Common myeloid progenitor, CD34-positive (primary cell): ENCODE measurements at regions of chr9 and their contacts with region 1.

Region 1: GRCh38 chr9:91177661-91178280 is 183.9 kb downstream of the AUH start:
- DNase-seq: peak; percentile 34 to 89 (median 84)
- H3K4me3 ChIP-seq: peak overlapping the region in 1 of 7 experiments; percentile 33
- H3K27ac ChIP-seq: no peak overlapping the region
- H3K4me1 ChIP-seq: peaks cover 14 to 25% (median 22%) of the 10 kb centered on the region in 4 experiments
- H3K27me3 ChIP-seq: no peaks in the 10 kb centered on the region

Region 2: DNA sequence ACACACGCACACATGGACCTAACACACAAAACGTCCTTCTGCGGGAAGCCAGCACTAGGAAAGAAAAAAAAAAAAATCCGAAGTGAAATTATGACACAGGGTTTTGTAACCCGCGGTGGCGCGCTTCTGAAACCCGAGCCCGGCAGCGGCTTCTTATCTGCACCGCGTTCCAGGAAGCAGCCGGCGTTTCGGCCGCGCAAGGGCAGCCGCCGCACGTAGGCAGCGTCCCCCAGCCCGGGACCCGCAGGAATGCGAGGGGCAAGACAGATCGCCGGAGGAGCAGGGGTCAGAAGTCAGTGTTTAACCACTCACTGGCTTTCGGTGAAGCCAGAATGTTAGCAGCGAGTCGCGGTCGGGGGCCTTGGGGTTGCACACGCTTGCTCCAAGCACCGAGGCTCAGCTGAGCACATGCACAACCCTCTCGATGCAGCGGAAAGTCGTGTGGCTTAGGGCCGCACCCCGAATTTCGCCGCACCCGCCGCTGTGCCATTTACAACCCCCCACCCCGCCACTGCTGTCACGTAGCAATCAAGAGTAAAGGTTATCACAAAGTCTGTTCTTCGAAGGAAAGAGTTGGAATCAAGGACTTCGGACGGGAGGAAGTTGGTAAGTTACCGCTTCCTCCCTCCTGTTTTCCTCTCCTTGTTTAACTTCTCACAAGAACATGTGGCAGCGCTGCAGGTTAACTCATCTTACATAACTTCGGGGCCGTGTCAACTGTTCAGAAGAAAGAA is 16.1 kb after region 1 on chr9:
- CTCF ChIA-PET with region 1: interaction called, 10 read pairs
- POLR2A ChIA-PET with region 1: interaction called, 4 read pairs
- DNase-seq: peak; percentile 96 to 98 (median 97)
- H3K4me3 ChIP-seq: peak overlapping the region in 6 of 7 experiments; percentile 42 to 72 (median 58)
- H3K27ac ChIP-seq: peak overlapping the region; percentile 97 to 98
- H3K4me1 ChIP-seq: peaks cover 5 to 56% (median 49%) of the 10 kb centered on the region in 4 experiments
- H3K27me3 ChIP-seq: no peaks in the 10 kb centered on the region

Region 3: GRCh38 chr9:91221332-91221731 is 43.6 kb after region 1 on chr9:
- CTCF ChIA-PET with region 1: no interaction called
- POLR2A ChIA-PET with region 1: no interaction called
- DNase-seq: no peak
- H3K4me3 ChIP-seq: no peak overlapping the region
- H3K27ac ChIP-seq: no peak overlapping the region
- H3K4me1 ChIP-seq: no peaks in the 10 kb centered on the region
- H3K27me3 ChIP-seq: no peaks in the 10 kb centered on the region

Region 4: GRCh38 chr9:91234510-91234909 is 56.7 kb after region 1 on chr9:
- CTCF ChIA-PET with region 1: no interaction called
- POLR2A ChIA-PET with region 1: no interaction called
- DNase-seq: no peak
- H3K4me3 ChIP-seq: no peak overlapping the region
- H3K27ac ChIP-seq: no peak overlapping the region
- H3K4me1 ChIP-seq: no peaks in the 10 kb centered on the region
- H3K27me3 ChIP-seq: no peaks in the 10 kb centered on the region